ENCODE measurements at regions of chr7 and their contacts with region 1.

Region 1: DNA sequence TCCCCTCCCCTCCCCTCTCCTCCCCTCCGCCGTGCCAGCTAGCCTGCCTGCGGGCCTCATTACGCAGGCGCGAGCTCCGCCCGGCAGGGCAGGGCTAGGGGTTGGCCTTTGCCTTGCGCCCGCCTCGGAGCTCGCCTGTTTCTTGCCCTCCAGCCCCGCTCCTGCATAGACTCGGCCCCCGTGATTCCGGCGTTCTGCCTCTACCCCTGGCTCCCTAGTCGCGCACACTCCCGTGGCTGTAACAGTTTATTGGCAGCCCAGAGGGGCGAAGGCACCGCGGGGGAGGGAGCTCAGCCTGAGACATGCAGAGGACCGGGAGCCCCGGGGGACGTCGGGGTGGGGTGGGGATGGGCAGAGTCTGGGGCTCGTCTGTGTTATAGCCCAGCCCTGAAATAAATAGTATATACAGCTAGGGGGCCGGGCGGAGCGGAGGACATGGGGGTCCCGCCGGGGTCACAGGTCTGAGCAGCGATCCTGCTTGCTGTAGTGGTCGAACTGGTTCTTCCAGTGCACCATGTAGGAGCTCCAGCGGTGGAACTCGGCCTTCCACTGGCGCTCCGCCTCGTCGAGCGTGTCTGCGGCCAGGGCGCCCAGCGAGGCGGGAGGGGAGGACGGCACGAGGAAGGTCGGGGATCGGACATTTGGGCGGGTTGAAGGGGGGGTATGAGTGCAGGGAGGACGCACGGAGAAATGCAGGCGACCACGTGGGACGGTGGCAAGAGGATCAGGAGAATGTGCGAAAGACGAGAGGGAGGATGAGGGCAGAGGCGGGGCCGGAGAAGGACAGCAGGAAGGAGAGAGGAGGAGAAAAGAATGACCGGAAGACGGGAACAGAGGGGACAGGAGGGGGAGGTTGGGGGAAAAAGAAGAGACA is 483 bp upstream of the UFSP1 start:
- DNase-seq: peak; percentile 96
- ATAC-seq: peak; percentile 94

Region 2: DNA sequence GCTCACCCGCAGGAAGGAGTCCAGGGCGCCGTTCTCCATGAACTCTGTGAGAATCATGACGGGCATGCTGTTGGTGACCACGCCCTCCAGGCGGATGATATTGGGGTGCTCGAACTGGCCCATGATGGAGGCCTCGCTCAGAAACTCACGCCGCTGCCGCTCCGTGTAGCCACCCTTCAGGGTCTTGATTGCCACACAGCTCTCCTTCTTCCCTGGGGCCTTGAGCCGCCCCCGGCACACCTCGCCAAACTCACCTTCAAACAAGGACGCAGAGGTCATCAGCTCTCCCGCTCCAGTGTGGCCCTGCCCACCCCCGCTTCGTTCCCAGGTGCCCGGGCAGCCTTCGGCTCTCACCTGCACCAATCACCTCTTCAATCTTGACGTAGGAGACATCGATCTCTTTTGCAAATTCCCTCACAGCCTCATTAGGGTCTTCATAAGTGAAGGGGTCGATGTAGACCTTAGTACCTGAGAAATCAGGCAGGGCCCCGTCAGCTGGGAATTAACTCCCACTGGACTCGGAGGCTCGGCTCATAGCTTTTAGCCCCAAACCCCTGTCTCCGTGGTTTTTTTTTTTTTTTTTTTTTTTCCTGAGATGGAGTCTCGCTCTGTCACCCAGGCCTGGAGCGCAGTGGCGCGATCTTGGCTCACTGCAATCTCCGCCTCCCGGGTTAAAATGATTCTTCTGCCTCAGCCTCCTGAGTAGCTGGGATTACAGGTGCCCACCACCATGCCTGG is 77.1 kb before region 1 on chr7:
- intact Hi-C with region 1: no loop called
- DNase-seq: no peak
- ATAC-seq: no peak

Region 3: GRCh38 chr7:100933735-100934134 is 43.7 kb after region 1 on chr7:
- intact Hi-C with region 1: no loop called
- DNase-seq: no peak
- ATAC-seq: no peak

Region 4: GRCh38 chr7:101077303-101078089 is 187.5 kb after region 1 on chr7:
- intact Hi-C with region 1: loop called (anchors 5 kb)
- DNase-seq: peak; percentile 77
- ATAC-seq: peak; percentile 89